ENCODE measurements at regions of chr1 and their contacts with region 1.

Region 1: DNA sequence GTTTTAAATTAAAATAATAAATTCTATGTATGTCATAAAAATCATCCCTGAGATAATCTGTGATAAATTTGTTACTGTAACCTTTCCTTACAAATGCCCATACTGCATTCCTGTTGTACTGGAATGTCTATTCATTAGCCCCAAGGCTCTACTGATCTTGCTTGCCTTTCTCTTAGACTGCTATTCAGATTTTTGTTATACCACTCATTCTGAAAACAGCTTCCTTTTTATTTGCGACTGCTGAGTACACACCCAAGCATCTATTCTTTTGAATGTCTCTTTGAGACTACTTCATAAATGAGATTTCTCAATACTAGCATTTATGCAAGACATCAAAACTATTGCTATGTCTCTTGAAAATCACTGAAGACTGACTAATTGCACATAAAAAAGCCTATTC is 38.6 kb downstream of the DENND1B start:
- DNase-seq: peak in 1 of 2 experiments; percentile 85
- H3K4me3 ChIP-seq: no peak overlapping the region
- H3K27ac ChIP-seq: peak overlapping the region; percentile 59
- H3K4me1 ChIP-seq: peaks cover 13% of the 10 kb centered on the region
- H3K27me3 ChIP-seq: no peaks in the 10 kb centered on the region
- CTCF ChIP-seq: no peak

Region 2: GRCh38 chr1:197413564-197413963 is 323.1 kb before region 1 on chr1:
- CTCF ChIA-PET with region 1: no interaction called
- POLR2A ChIA-PET with region 1: no interaction called
- intact Hi-C with region 1: no loop called
- DNase-seq: no peak
- H3K4me3 ChIP-seq: no peak overlapping the region
- H3K27ac ChIP-seq: no peak overlapping the region
- H3K4me1 ChIP-seq: no peaks in the 10 kb centered on the region
- H3K27me3 ChIP-seq: no peaks in the 10 kb centered on the region
- CTCF ChIP-seq: no peak

Region 3: GRCh38 chr1:197633447-197634039 is 103.1 kb before region 1 on chr1:
- CTCF ChIA-PET with region 1: no interaction called
- POLR2A ChIA-PET with region 1: no interaction called
- intact Hi-C with region 1: no loop called
- DNase-seq: no peak
- H3K4me3 ChIP-seq: no peak overlapping the region
- H3K27ac ChIP-seq: no peak overlapping the region
- H3K4me1 ChIP-seq: no peaks in the 10 kb centered on the region
- H3K27me3 ChIP-seq: no peaks in the 10 kb centered on the region
- CTCF ChIP-seq: no peak

Region 4: GRCh38 chr1:197862671-197863070 is 126.0 kb after region 1 on chr1:
- CTCF ChIA-PET with region 1: no interaction called
- POLR2A ChIA-PET with region 1: interaction called, 18 read pairs
- intact Hi-C with region 1: no loop called
- DNase-seq: no peak
- H3K4me3 ChIP-seq: no peak overlapping the region
- H3K27ac ChIP-seq: no peak overlapping the region
- H3K4me1 ChIP-seq: no peaks in the 10 kb centered on the region
- H3K27me3 ChIP-seq: no peaks in the 10 kb centered on the region
- CTCF ChIP-seq: no peak

Measured in PC-9 (cell line).